Prostate gland (tissue), 2 donors: ENCODE measurements at regions of chr6 and their contacts with region 1.

Region 1: GRCh38 chr6:17987576-17988421 is at the start of gene KIF13A:
- DNase-seq: peak; percentile 59
- H3K4me3 ChIP-seq: peak within 1 kb of the TSS; percentile 66 to 72
- H3K27ac ChIP-seq: peak within 1 kb of the TSS; percentile 90 to 95
- H3K4me1 ChIP-seq: no peaks in the 10 kb centered on the region
- H3K27me3 ChIP-seq: no peaks in the 10 kb centered on the region
- CTCF ChIP-seq: peak in 1 of 4 experiments; percentile 9
- POLR2A ChIP-seq: peak; percentile 38
- total RNA-seq, gene KIF13A: 36.8 to 57.5 TPM

Region 2: GRCh38 chr6:17865798-17866725 is 121.7 kb before region 1 on chr6:
- intact Hi-C with region 1: loop called (anchors 10 kb)
- DNase-seq: peak; percentile 14
- H3K4me3 ChIP-seq: no peak overlapping the region
- H3K27ac ChIP-seq: peak overlapping the region in 1 of 2 donors; percentile 19
- H3K4me1 ChIP-seq: no peaks in the 10 kb centered on the region
- H3K27me3 ChIP-seq: no peaks in the 10 kb centered on the region
- CTCF ChIP-seq: no peak
- POLR2A ChIP-seq: no peak

Region 3: GRCh38 chr6:17932330-17932852 is 55.4 kb before region 1 on chr6:
- intact Hi-C with region 1: loop called (anchors 10 kb)
- DNase-seq: no peak
- H3K4me3 ChIP-seq: no peak overlapping the region
- H3K27ac ChIP-seq: no peak overlapping the region
- H3K4me1 ChIP-seq: peaks cover 6% of the 10 kb centered on the region
- H3K27me3 ChIP-seq: no peaks in the 10 kb centered on the region
- CTCF ChIP-seq: no peak
- POLR2A ChIP-seq: no peak

Region 4: GRCh38 chr6:18053078-18053477 is 65.3 kb after region 1 on chr6:
- intact Hi-C with region 1: loop called (anchors 5 kb)
- DNase-seq: peak; percentile 11
- H3K4me3 ChIP-seq: no peak overlapping the region
- H3K27ac ChIP-seq: no peak overlapping the region
- H3K4me1 ChIP-seq: no peaks in the 10 kb centered on the region
- H3K27me3 ChIP-seq: no peaks in the 10 kb centered on the region
- CTCF ChIP-seq: no peak
- POLR2A ChIP-seq: no peak

Region 5: GRCh38 chr6:18122124-18123093 is 134.6 kb after region 1 on chr6 and contains the start of gene NHLRC1:
- intact Hi-C with region 1: loop called (anchors 2 kb)
- DNase-seq: peak; percentile 82
- H3K4me3 ChIP-seq: peak within 1 kb of the TSS; percentile 37 to 41
- H3K27ac ChIP-seq: peak within 1 kb of the TSS; percentile 3 to 35
- H3K4me1 ChIP-seq: no peaks in the 10 kb centered on the region
- H3K27me3 ChIP-seq: no peaks in the 10 kb centered on the region
- CTCF ChIP-seq: peak; percentile 87 to 98 (median 96)
- POLR2A ChIP-seq: peak; percentile 53
- total RNA-seq, gene NHLRC1: 2.7 to 4.8 TPM

Region 6: DNA sequence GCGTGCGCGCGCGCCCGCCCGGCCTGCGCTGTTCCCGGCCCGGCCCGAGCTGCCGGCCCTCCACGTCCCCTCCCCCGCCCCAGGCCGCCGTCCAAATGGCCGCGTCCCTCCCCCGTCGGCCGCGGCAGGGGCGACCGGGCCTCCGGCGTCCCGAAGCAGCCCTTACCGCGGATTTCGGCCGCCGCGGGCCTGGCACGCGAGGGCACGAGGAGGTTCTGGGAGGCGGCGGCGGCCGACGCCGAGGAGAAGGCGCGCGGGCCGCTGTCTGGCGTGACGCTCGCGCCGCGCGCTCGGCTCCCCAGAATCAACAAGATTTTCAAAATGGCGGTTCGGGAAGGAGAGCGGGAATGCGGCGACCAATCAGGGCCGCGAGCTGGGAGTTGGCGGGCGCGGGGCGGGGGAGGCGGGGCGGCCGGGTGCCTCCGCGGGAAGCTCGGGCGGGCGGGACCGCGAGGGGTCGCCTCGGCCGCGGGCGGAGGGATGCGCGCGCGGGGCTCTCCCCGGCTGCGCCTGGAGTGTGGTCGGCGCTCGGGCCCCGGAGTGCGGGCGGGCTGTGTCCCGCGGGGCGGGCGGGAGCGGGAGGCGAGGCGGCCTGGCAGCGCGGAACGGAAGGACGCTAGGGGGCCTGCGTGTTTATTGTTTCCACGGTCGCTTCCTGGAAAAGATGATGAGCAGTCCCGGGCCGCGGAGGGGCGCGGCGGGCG is 276.6 kb after region 1 on chr6 and contains the start of gene DEK:
- intact Hi-C with region 1: loop called (anchors 5 kb)
- DNase-seq: peak; percentile 85
- H3K4me3 ChIP-seq: peak within 1 kb of the TSS; percentile 81 to 85
- H3K27ac ChIP-seq: peak within 1 kb of the TSS; percentile 98 to 99
- H3K4me1 ChIP-seq: no peaks in the 10 kb centered on the region
- H3K27me3 ChIP-seq: no peaks in the 10 kb centered on the region
- CTCF ChIP-seq: peak in 3 of 4 experiments; percentile 39 to 71 (median 67)
- POLR2A ChIP-seq: peak; percentile 47
- total RNA-seq, gene DEK: 74.1 to 133 TPM

Region 7: GRCh38 chr6:18277237-18278006 is 289.6 kb after region 1 on chr6:
- intact Hi-C with region 1: no loop called
- DNase-seq: no peak
- H3K4me3 ChIP-seq: peak overlapping the region; percentile 28 to 40
- H3K27ac ChIP-seq: no peak overlapping the region
- H3K4me1 ChIP-seq: no peaks in the 10 kb centered on the region
- H3K27me3 ChIP-seq: no peaks in the 10 kb centered on the region
- CTCF ChIP-seq: no peak
- POLR2A ChIP-seq: no peak

Region 8: GRCh38 chr6:18444056-18444575 is 456.3 kb after region 1 on chr6:
- intact Hi-C with region 1: no loop called
- DNase-seq: no peak
- H3K4me3 ChIP-seq: no peak overlapping the region
- H3K27ac ChIP-seq: no peak overlapping the region
- H3K4me1 ChIP-seq: no peaks in the 10 kb centered on the region
- H3K27me3 ChIP-seq: no peaks in the 10 kb centered on the region
- CTCF ChIP-seq: no peak
- POLR2A ChIP-seq: no peak